ENCODE measurements at regions of chr9 and their contacts with region 1.

Region 1: GRCh38 chr9:89428901-89429890 is 68.7 kb downstream of the SEMA4D start:
- DNase-seq: peak; percentile 32

Region 2: DNA sequence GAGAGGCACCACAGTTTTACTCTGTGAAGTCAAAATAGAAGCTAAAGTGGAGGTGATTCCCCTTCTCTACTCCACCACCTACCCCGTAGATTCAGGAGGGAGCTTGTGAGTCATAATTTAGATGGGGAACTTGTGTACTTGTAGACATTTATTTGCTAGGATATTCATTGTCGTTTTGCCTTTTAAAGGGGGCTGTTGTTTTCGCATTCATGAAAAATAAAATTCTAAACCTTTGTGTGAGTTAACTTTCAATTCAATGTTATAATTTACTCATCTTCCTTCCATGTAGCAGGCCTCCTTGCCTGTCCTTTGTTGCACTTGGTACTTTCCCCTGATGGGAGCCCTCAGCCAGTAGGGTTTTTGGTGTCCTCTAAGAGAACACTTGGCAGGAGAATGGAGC is 88.9 kb before region 1 on chr9:
- in situ Hi-C with region 1: no loop called
- DNase-seq: no peak

Region 3: DNA sequence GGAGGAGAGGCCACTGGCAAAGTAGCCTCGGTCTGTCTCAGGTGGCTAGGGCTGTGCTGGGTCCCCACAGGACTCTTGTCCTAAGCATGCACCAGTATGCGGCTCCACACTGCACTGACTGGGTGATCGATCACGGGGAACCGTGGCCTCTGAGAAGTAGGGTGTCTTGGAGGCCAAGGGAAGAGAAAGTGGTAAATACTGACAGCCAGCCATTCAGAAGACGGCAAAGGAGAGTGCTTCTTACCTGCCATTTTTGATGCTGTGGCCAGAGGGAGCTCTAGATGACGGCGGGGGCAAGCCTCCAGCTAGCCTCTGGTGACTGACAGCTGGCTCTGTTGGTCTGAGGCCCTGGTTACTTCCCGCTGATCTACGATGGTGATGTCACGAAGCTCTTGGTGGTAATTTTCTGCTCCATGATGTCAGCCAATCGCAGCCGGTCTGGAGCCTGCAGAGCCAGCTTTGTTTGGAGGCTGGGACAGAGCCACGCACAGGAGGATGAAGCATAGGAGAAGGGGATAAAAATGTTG is 135.2 kb after region 1 on chr9:
- in situ Hi-C with region 1: loop called (anchors 25 kb)
- DNase-seq: peak; percentile 64